Activated naive CD4-positive, alpha-beta T cell treated with anti-CD3 and anti-CD28 coated beads for 36 hours (primary cell): ENCODE measurements at regions of chr6 and their contacts with region 1.

Region 1: DNA sequence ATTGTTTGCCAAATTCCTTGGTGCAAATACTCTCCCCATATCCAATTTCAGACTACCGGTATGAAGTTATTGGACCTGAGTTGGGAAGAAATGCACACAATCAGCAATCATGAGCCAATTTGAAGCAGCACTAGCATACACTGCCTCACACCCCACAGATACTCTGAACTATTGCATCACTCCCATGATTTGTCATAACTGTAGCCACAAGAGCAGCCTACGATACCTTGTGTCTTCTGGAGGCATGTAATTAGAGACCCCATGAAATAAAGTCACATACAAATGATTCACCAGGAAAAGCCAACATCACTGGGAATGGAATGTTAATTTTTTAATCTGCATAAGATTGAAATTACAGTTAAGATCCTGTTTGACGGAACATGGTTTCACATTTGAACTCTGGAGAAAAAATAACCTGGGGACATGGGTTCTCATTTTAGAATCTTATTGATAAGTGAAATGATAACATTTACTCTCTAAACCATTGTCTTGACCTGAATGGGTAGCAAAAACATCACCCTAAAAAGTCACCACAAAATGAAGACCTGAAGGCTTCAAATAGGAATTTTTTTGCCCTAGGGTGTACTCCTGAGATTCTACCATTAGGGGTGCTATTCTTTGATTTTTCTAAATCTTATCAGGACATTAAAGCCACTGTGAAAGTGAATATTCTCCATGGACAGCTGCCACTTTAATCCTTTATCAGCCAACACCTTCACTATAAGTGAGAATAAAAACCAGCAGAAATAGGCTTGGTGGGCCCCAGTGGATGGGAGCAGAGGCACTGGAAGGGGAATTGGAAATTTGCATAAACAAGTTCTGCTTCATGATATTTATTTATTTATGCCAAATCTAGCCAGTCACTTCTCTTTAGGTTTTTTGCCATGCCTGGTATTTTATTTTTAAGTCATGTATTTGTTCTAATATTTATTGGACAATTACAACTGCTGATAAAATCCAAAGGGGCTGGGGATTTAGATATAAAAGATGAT is 34.5 kb upstream of the HBS1L start:
- DNase-seq: peak; percentile 61
- H3K4me3 Mint-ChIP-seq: peak overlapping the region; percentile 23
- H3K27ac Mint-ChIP-seq: peak overlapping the region; percentile 78
- H3K4me1 Mint-ChIP-seq: peaks cover 86% of the 10 kb centered on the region
- H3K27me3 Mint-ChIP-seq: no peaks in the 10 kb centered on the region

Region 2: DNA sequence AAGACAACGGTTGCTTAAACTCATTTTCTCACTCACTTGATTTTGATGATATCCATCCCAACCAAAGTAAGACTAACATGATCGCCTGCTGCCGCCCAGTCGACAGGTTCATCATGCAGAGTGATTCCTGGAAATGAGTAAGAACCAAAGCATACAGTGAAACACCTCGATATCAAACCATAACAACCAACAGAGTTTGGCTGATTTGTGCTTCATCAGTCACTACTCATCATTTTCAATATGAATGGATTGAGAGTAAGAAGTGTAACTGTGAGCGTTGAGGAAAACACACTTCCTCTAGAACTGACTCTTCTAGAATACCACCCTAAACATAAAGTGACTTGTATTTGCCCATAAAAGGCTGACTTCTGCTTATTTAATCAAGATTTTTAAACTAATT is 110.0 kb before region 1 on chr6:
- CTCF ChIA-PET with region 1: interaction called, 3 read pairs
- intact Hi-C with region 1: loop called (anchors 1 kb)
- DNase-seq: peak; percentile 72
- H3K4me3 Mint-ChIP-seq: no peak overlapping the region
- H3K27ac Mint-ChIP-seq: peak overlapping the region; percentile 33
- H3K4me1 Mint-ChIP-seq: peaks cover 42% of the 10 kb centered on the region
- H3K27me3 Mint-ChIP-seq: no peaks in the 10 kb centered on the region

Region 3: GRCh38 chr6:135030056-135030473 is 59.0 kb before region 1 on chr6:
- CTCF ChIA-PET with region 1: no interaction called
- intact Hi-C with region 1: loop called (anchors 1 kb)
- DNase-seq: peak; percentile 18
- H3K4me3 Mint-ChIP-seq: peak overlapping the region; percentile 10
- H3K27ac Mint-ChIP-seq: peak overlapping the region; percentile 71
- H3K4me1 Mint-ChIP-seq: peaks cover 63% of the 10 kb centered on the region
- H3K27me3 Mint-ChIP-seq: no peaks in the 10 kb centered on the region

Region 4: DNA sequence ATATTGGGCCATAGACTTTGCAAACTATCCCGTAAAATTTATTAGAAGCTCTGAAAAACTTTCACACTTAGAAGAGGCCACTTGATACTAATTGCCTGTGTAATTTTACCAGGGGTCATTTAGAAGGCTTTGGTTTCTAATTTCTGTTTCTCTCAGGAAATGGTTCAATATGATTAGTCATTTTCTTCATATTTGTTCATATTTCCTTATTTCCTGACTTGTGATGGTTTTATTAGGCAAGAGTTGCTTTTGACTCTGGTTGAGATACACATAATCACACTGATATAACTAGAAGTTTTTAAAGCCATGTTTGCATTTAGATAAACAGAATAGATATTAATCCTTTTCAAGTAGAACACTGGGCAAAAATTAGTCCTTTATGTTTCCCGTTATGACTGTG is 22.7 kb before region 1 on chr6:
- CTCF ChIA-PET with region 1: interaction called, 3 read pairs
- intact Hi-C with region 1: loop called (anchors 2 kb)
- DNase-seq: no peak
- H3K4me3 Mint-ChIP-seq: no peak overlapping the region
- H3K27ac Mint-ChIP-seq: no peak overlapping the region
- H3K4me1 Mint-ChIP-seq: peaks cover 17% of the 10 kb centered on the region
- H3K27me3 Mint-ChIP-seq: no peaks in the 10 kb centered on the region

Region 5: GRCh38 chr6:135114355-135115145 is 25.4 kb after region 1 on chr6:
- CTCF ChIA-PET with region 1: interaction called, 4 read pairs
- intact Hi-C with region 1: loop called (anchors 1 kb)
- DNase-seq: peak; percentile 75
- H3K4me3 Mint-ChIP-seq: no peak overlapping the region
- H3K27ac Mint-ChIP-seq: peak overlapping the region; percentile 74
- H3K4me1 Mint-ChIP-seq: peaks cover 72% of the 10 kb centered on the region
- H3K27me3 Mint-ChIP-seq: no peaks in the 10 kb centered on the region

Region 6: DNA sequence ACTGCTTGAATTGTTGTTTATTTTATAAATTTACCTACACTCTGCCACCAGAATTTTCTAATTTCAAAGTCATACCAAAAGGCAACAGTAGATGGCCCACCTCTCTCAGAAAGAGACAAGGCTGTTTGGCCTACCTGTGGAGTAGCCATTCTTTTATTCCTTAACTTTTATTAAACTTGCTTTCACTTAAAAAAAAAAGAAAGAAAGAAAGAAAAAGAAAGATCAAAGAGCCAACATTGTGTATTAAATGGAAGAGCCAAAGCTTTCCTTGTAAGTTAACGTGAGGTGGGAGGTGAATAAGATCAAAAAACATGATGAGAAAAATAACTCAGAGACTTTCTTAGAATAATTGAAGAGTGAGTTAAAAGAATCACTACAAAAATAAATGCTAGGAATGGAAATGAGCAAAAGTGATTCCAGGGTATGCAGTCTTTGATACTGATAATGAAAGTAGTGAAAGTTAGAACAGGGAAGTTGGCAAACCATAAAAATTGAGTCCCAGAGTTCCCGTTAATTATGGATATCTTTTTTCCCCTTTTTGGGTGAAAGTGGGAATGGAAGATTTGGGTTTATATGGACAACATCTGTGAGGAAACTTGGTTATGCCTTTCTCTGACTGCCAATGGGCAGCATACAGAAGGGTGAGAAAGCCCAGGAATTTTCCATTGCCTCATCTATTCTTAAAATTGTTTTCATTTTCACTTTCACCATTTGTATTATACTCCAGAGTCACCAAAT is 56.1 kb after region 1 on chr6:
- CTCF ChIA-PET with region 1: interaction called, 9 read pairs
- intact Hi-C with region 1: loop called (anchors 1 kb)
- DNase-seq: no peak
- H3K4me3 Mint-ChIP-seq: no peak overlapping the region
- H3K27ac Mint-ChIP-seq: peak overlapping the region; percentile 76
- H3K4me1 Mint-ChIP-seq: peaks cover 51% of the 10 kb centered on the region
- H3K27me3 Mint-ChIP-seq: no peaks in the 10 kb centered on the region

Region 7: DNA sequence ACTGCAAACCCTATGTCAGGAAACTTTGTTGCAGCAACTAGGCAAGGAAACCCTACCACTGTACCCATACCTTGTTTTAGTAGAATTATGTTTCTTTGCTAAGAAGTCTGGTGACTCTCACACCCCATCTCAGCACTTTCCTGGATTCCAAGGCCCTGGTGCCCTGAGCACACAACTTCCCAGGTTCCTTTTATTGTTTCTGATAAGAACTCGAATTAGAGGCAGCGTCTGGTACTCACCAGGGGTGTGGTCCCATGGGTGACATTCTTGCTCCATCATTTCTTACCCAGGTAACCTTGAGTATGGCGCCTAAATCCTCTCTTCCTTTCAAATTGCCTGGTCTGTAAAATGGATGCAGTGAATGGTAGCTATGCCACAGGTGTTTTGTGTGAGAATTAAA is 126.0 kb after region 1 on chr6:
- CTCF ChIA-PET with region 1: no interaction called
- intact Hi-C with region 1: no loop called
- DNase-seq: no peak
- H3K4me3 Mint-ChIP-seq: no peak overlapping the region
- H3K27ac Mint-ChIP-seq: no peak overlapping the region
- H3K4me1 Mint-ChIP-seq: peaks cover 24% of the 10 kb centered on the region
- H3K27me3 Mint-ChIP-seq: no peaks in the 10 kb centered on the region

Region 8: GRCh38 chr6:135870722-135871121 is 781.6 kb after region 1 on chr6:
- CTCF ChIA-PET with region 1: no interaction called
- intact Hi-C with region 1: loop called (anchors 10 kb)
- DNase-seq: no peak
- H3K4me3 Mint-ChIP-seq: no peak overlapping the region
- H3K27ac Mint-ChIP-seq: no peak overlapping the region
- H3K4me1 Mint-ChIP-seq: peaks cover 24% of the 10 kb centered on the region
- H3K27me3 Mint-ChIP-seq: no peaks in the 10 kb centered on the region